Sigmoid colon (tissue), 7 donors: ENCODE measurements at regions of chr6 and their contacts with region 1.

Region 1: DNA sequence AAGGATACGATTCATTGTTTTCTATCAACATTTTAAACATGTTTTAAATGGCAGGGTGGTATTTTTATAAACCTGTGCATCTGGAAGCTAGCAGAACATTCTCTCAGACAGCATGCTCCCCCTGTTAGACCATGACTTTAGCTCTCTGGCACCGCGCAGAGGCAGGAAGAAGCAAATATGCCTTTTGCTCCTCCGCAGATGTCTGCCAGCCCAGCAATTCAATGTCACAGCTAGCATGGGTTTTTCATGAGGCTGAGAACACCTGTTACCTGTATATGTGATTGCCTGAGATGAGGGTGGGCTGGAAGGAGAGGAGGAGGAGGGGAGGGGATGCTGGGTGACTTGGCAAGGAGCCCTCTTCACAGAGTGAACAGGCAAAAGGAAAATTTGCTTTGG is 6.7 kb downstream of the MTCH1 start:
- DNase-seq: peak; percentile 87
- H3K4me3 ChIP-seq: no peak overlapping the region
- H3K27ac ChIP-seq: peak overlapping the region in 3 of 4 donors; percentile 50 to 63 (median 60)
- H3K4me1 ChIP-seq: peaks cover 0 to 58% (median 56%) of the 10 kb centered on the region in 4 donors
- H3K27me3 ChIP-seq: no peaks in the 10 kb centered on the region
- CTCF ChIP-seq: peak; percentile 54 to 66 (median 60)
- EP300 ChIP-seq: no peak
- POLR2A ChIP-seq: no peak

Region 2: GRCh38 chr6:36765594-36766398 is 213.5 kb before region 1 on chr6:
- intact Hi-C with region 1: loop called (anchors 2 kb)
- DNase-seq: peak; percentile 89
- H3K4me3 ChIP-seq: no peak overlapping the region
- H3K27ac ChIP-seq: no peak overlapping the region
- H3K4me1 ChIP-seq: peaks cover 0 to 28% (median 20%) of the 10 kb centered on the region in 4 donors
- H3K27me3 ChIP-seq: no peaks in the 10 kb centered on the region
- CTCF ChIP-seq: peak; percentile 70 to 83 (median 80)
- EP300 ChIP-seq: no peak
- POLR2A ChIP-seq: no peak

Region 3: GRCh38 chr6:36885461-36886401 is 93.6 kb before region 1 on chr6 and contains the start of gene C6orf89:
- intact Hi-C with region 1: loop called (anchors 1 kb)
- DNase-seq: peak; percentile 99
- H3K4me3 ChIP-seq: peak within 1 kb of the TSS; percentile 69 to 84 (median 78)
- H3K27ac ChIP-seq: peak within 1 kb of the TSS; percentile 85 to 89 (median 87)
- H3K4me1 ChIP-seq: peaks cover 0 to 37% (median 24%) of the 10 kb centered on the region in 4 donors
- H3K27me3 ChIP-seq: no peaks in the 10 kb centered on the region
- CTCF ChIP-seq: peak; percentile 84 to 98 (median 93)
- EP300 ChIP-seq: peak in 1 of 4 donors; percentile 56
- POLR2A ChIP-seq: peak; percentile 66
- total RNA-seq, gene C6orf89: 37.3 to 51.4 (median 44.3) TPM

Region 4: GRCh38 chr6:37018198-37019064 is 39.1 kb after region 1 on chr6:
- intact Hi-C with region 1: loop called (anchors 2 kb)
- DNase-seq: peak; percentile 96
- H3K4me3 ChIP-seq: no peak overlapping the region
- H3K27ac ChIP-seq: peak overlapping the region; percentile 55 to 63 (median 60)
- H3K4me1 ChIP-seq: peaks cover 0 to 18% (median 15%) of the 10 kb centered on the region in 4 donors
- H3K27me3 ChIP-seq: no peaks in the 10 kb centered on the region
- CTCF ChIP-seq: peak; percentile 79 to 90 (median 88)
- EP300 ChIP-seq: no peak
- POLR2A ChIP-seq: no peak

Region 5: DNA sequence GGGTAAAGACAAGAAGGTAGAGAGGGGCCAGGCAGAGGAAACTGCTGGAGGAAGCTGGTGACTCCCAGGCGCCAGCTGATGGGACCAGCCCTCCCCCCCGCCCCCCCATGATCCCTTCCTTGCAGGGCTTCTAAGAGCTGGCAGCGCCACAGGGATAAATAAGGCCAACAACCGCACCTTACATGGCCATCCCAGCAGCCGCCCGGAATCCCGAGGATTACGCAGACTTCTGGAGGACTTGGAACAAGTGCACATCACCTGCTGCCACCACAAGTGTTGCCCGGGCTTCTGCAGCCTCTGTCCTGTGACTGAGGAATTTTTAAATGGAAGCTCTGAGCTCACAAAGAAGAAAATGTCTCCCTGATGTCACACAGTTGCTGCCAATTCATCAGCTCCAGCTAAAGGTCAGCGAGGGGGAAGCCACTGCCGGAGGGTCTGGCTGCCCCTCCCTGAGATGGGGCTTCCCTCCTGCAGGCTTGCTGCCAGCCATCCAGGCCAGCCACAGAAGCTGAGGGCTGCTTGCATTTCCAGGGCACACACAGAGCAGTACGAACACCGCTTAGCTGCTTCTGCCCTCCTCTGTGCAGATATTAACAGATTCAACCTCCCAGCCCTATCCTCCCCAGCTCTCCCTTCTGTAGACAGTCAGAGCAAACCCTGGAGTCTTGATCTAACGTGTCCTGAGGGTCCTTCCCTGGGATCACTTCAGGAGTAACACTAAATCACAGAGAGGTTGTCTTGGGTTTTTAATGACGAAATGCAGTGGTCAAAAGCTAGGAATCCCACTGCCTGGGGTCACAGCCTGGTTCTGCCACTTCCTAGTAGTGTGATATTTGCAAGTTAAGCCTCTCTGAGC is 152.0 kb after region 1 on chr6:
- intact Hi-C with region 1: no loop called
- DNase-seq: peak; percentile 97
- H3K4me3 ChIP-seq: peak overlapping the region; percentile 12 to 43 (median 38)
- H3K27ac ChIP-seq: peak overlapping the region; percentile 86 to 97 (median 93)
- H3K4me1 ChIP-seq: peaks cover 0 to 79% (median 51%) of the 10 kb centered on the region in 4 donors
- H3K27me3 ChIP-seq: no peaks in the 10 kb centered on the region
- CTCF ChIP-seq: no peak
- EP300 ChIP-seq: peak; percentile 91 to 97 (median 92)
- POLR2A ChIP-seq: peak; percentile 31